ENCODE measurements at regions of chr12 and their contacts with region 1.

Region 1: GRCh38 chr12:48758221-48758620 is 30.7 kb downstream of the ADCY6 start:
- DNase-seq: no peak
- H3K4me3 Mint-ChIP-seq: no peak overlapping the region
- H3K27ac Mint-ChIP-seq: no peak overlapping the region
- H3K4me1 Mint-ChIP-seq: peaks cover 2% of the 10 kb centered on the region
- H3K27me3 Mint-ChIP-seq: peaks cover 4% of the 10 kb centered on the region

Region 2: GRCh38 chr12:48696626-48697025 is 61.6 kb before region 1 on chr12:
- CTCF ChIA-PET with region 1: no interaction called
- POLR2A ChIA-PET with region 1: no interaction called
- DNase-seq: no peak
- H3K4me3 Mint-ChIP-seq: no peak overlapping the region
- H3K27ac Mint-ChIP-seq: no peak overlapping the region
- H3K4me1 Mint-ChIP-seq: peaks cover 2% of the 10 kb centered on the region
- H3K27me3 Mint-ChIP-seq: no peaks in the 10 kb centered on the region

Region 3: GRCh38 chr12:48744251-48745008 is 13.8 kb before region 1 on chr12:
- CTCF ChIA-PET with region 1: interaction called, 10 read pairs
- POLR2A ChIA-PET with region 1: no interaction called
- DNase-seq: no peak
- H3K4me3 Mint-ChIP-seq: no peak overlapping the region
- H3K27ac Mint-ChIP-seq: no peak overlapping the region
- H3K4me1 Mint-ChIP-seq: no peaks in the 10 kb centered on the region
- H3K27me3 Mint-ChIP-seq: peaks cover 18% of the 10 kb centered on the region